AG04449 (cell line): ENCODE measurements at regions of chr11 and their contacts with region 1.

Region 1: DNA sequence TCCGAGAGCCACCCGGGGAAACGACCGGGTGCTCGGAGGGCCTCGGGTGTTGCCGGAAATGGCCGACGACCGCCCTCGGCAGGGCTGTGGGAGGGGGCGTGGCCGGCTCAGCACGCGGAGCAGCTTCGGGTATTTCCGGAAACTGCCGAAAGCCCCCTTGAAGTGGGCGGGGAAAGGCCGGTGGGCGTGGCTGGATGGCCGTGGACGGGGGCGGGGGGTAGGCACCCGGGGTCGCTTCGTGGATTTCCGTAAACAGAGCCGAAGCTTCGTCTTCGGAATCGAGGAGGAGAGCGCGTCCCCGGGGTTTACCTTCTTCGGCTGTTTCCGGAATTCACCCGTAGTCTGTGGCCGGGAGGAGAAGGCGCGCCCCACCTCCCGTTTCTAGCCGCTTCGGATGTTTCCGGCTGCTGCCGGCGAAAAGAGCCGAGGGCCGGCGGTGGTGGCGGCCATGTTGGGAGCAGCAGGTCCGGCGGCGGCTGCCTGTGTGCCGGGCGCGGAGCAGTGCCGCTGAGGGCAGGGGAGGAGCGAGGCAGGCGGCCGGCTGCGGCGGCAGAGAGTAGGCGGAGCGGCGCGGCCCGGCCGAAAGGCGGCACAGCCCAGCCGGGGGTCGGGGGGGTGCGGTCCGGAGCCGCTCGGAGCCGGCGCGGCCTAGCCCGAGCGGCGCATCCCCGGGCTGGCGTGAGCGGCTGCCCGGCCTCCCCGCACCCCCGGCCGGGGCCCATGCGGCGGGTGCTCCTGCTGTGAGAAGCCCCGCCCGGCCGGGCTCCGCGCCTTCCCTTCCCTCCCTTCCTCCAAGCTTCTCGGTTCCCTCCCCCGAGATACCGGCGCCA is at the start of gene MARK2:
- DNase-seq: peak; percentile 79
- H3K4me3 ChIP-seq: peak within 1 kb of the TSS; percentile 78
- CTCF ChIP-seq: no peak

Region 2: DNA sequence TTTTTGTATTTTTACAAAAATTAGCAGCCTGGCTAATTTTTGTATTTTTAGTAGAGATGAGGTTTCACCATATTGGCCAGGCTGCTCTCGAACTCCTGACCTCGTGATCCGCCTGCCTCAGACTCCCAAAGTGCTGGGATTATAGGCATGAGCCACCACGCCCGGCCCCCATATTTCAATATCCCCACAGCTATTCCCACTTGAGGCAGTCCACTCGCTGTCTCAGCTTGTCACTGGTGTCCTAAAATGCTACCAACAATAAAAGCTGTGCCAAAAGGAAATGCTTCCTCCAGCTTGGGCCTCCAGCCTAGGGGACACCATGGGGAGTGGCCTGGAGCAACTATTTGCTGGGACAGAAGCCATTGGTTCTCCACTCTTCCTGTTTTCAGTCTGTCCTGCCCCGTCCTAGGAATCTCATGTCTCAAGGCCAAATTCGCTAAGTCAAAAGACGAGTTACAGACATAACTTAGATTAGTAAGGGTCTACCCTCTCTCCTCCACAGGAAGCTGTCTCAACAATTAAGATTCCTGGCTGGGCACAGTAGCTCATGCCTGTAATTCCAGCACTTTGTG is 33.0 kb before region 1 on chr11:
- CTCF ChIA-PET with region 1: interaction called, 13 read pairs
- POLR2A ChIA-PET with region 1: no interaction called
- DNase-seq: no peak
- H3K4me3 ChIP-seq: no peak overlapping the region
- CTCF ChIP-seq: no peak

Region 3: DNA sequence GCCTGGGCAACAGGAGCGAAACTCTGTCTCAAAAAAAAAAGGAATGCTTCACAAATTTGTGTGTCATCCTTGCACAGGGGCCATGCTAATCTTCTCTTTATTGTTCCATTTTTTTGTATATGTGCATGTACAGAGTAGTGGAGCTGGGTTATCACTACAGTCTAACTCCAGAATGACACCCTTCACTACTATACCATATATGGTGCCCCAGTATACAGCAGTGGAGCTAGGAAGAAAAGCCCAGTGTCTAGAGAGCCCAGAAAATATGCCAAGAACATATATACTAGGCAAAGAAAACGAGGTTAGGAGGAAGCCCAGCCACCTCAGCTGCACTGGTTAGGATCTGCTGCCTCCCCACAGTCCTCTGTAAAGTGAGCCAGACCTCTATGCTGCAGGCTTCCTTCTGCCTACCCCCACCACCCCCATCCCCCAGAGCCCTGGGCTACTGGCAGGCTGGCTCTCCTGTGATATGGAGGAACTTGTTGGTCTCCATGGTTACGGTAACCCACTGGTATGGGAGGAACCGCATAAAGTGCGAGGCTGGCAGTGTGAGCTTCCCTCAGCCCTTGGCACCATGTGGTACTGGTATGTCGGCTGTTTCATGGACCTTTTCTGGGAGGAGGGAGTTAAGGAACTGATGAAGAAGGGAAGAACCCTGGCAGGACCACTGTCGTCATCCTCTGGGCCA is 43.8 kb after region 1 on chr11:
- CTCF ChIA-PET with region 1: interaction called, 10 read pairs
- POLR2A ChIA-PET with region 1: interaction called, 3 read pairs
- DNase-seq: no peak
- H3K4me3 ChIP-seq: no peak overlapping the region
- CTCF ChIP-seq: no peak

Region 4: GRCh38 chr11:63933459-63933858 is 94.6 kb after region 1 on chr11:
- CTCF ChIA-PET with region 1: interaction called, 31 read pairs
- POLR2A ChIA-PET with region 1: no interaction called
- DNase-seq: no peak
- H3K4me3 ChIP-seq: no peak overlapping the region
- CTCF ChIP-seq: no peak

Region 5: GRCh38 chr11:63951779-63952536 is 113.1 kb after region 1 on chr11:
- CTCF ChIA-PET with region 1: interaction called, 639 read pairs
- POLR2A ChIA-PET with region 1: no interaction called
- DNase-seq: no peak
- H3K4me3 ChIP-seq: no peak overlapping the region
- CTCF ChIP-seq: no peak

Region 6: GRCh38 chr11:64000026-64000739 is 161.3 kb after region 1 on chr11:
- CTCF ChIA-PET with region 1: interaction called, 28 read pairs
- POLR2A ChIA-PET with region 1: no interaction called
- DNase-seq: no peak
- H3K4me3 ChIP-seq: peak overlapping the region; percentile 36
- CTCF ChIP-seq: peak; percentile 86

Region 7: DNA sequence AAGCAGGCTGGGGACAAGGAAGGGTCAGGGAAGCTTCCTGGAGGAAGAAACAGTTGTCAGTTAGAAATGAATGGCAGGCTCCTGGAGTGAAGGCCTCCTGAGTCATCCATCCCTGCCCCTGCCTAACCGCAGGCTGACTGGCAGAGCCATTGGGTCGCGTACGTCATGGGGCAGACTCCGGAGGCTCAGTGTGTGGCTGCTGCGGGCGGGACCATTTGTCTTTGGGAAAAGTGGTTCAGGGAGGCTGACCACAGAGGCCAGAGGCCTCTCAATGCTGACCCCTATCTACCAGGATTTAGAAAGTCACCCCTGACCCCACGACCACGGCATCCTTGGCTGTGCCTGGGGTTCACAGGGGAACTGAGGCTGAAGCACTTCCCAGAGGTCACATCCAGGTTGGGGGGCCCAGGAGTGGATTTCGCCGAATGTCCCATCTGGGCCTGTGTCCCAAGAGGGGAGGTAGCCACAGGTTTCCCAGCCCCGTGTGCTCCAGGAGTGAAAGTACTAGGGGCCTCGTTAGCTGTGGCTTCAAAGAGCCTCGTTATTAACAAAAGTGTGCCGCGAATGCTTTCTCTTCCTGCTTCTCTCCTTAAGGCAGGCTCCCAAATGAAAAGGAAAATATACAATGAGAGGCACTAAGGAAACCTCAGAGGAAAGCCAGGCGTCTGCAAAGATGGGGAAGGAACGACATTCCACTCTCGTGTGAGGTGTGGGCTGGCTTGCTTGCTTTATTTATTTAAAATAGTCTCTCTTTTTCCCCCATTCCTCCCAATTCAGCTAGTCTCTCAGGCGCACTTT is 255.8 kb after region 1 on chr11:
- CTCF ChIA-PET with region 1: no interaction called
- POLR2A ChIA-PET with region 1: no interaction called
- DNase-seq: peak; percentile 44
- H3K4me3 ChIP-seq: no peak overlapping the region
- CTCF ChIP-seq: no peak